ENCODE measurements at regions of chr2 and their contacts with region 1.

Region 1: DNA sequence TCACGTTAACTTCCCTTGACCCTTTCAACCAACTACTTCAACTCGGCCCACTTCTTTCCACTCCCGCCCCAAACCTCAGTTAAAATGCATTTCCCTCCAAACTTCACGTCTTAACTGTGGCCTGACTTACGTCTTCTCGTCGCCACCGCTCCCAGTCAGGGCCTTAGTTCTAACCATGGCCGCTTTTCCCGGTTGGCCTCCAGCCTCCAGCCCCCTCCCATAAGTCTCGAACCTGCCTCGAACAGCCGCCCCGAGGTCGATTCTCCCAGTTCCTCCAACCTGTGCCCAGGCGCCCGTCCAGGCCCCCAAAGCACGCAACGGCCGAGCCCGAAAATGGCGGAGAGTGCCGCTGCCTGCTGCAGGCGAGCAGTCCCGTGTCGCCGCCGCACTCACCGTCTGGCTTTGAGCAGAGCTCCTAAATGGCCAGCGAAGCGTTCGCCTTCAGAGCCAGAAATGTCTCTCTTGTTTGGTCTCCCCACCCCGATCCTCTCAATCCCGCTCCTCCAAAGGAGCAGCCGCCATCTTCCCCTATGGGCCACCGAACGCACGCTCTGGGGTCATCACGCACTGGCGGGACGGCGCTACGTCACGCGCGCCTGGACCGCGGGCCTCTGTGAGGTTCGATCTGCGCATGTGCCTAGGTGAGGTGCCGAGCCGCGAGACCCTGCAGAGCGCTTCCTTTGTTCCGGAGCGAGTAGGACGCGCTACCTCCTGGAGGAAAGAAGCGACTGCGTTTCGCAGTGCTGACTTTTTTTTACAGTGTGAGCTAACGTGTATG is at the start of gene WDR33:
- DNase-seq: peak; percentile 94
- H3K4me3 Mint-ChIP-seq: peak within 1 kb of the TSS; percentile 95
- H3K27ac Mint-ChIP-seq: peak within 1 kb of the TSS; percentile 94
- H3K4me1 Mint-ChIP-seq: peaks cover 42% of the 10 kb centered on the region
- H3K27me3 Mint-ChIP-seq: peaks cover 6% of the 10 kb centered on the region
- total RNA-seq, gene WDR33: 81.0 and 82.4 TPM in 2 replicates

Region 2: GRCh38 chr2:127205218-127206125 is 605.3 kb before region 1 on chr2:
- intact Hi-C with region 1: no loop called
- DNase-seq: no peak
- H3K4me3 Mint-ChIP-seq: no peak overlapping the region
- H3K27ac Mint-ChIP-seq: no peak overlapping the region
- H3K4me1 Mint-ChIP-seq: no peaks in the 10 kb centered on the region
- H3K27me3 Mint-ChIP-seq: peaks cover 18% of the 10 kb centered on the region

Region 3: DNA sequence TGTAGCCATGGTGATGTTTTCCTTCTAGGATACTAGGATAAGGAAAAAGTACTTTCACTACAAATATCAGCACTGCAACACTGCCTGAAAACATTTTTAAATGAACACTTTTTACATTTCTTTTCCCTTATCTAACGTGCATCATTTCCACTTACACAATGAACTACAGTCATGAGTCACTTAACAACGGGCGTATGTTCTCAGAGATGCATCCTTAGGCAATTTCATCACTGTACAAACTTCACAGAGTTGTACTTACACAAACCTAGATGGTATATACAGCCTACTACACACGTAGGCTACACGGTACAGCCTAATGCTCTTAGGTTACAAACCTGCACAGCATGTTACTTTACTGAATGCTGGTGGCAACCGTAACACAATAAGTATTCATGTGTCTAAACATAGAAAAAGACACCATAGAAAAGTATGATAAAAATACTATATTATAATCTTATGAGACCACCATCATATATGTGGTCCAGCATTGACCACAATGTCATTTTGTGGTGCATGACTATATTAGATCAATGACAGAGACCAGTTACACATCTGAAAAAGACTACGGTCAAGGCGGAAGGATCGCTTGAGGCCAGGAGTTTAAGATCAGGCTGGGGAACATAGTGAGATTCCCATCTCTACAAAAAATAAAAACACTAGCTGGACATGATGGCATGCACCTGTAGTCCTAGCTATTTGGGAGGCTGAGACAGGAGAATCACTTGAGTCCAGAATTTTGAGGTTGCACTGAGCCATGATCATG is 39.7 kb before region 1 on chr2:
- intact Hi-C with region 1: loop called (anchors 2 kb)
- DNase-seq: no peak
- H3K4me3 Mint-ChIP-seq: no peak overlapping the region
- H3K27ac Mint-ChIP-seq: no peak overlapping the region
- H3K4me1 Mint-ChIP-seq: peaks cover 9% of the 10 kb centered on the region
- H3K27me3 Mint-ChIP-seq: no peaks in the 10 kb centered on the region

Region 4: GRCh38 chr2:127829845-127830246 is 19.0 kb after region 1 on chr2:
- intact Hi-C with region 1: loop called (anchors 1 kb)
- DNase-seq: peak; percentile 62
- H3K4me3 Mint-ChIP-seq: peak overlapping the region; percentile 20
- H3K27ac Mint-ChIP-seq: peak overlapping the region; percentile 85
- H3K4me1 Mint-ChIP-seq: peaks cover 45% of the 10 kb centered on the region
- H3K27me3 Mint-ChIP-seq: peaks cover 4% of the 10 kb centered on the region

Measured in activated T-helper 1 cell treated with anti-CD3 and anti-CD28 coated beads, Interleukin-12 subunit alpha, Interleukin-12 subunit beta, Interleukin-2, Interleukin-4 antibody, amounts not matched to agents 30 ng/mL and 10 ng/mL and 1 ng/mL, durations not matched to agents 14 hours and 24 hours and 36 hours (primary cell).